B cell (primary cell): ENCODE measurements at regions of chr19 and their contacts with region 1.

Region 1: GRCh38 chr19:52048555-52049501 is at the start of gene ZNF432:
- DNase-seq: peak; percentile 93
- ATAC-seq: peak; percentile 87
- H3K4me3 ChIP-seq: peak within 1 kb of the TSS; percentile 70 to 99 (median 93)
- H3K4me3 Mint-ChIP-seq: peak within 1 kb of the TSS; percentile 98
- H3K27ac ChIP-seq: peak within 1 kb of the TSS; percentile 92 to 99
- H3K27ac Mint-ChIP-seq: peak within 1 kb of the TSS; percentile 100
- H3K4me1 ChIP-seq: peaks cover 9 to 10% of the 10 kb centered on the region in 2 donors
- H3K4me1 Mint-ChIP-seq: peaks cover 22% of the 10 kb centered on the region
- H3K27me3 ChIP-seq: no peaks in the 10 kb centered on the region
- H3K27me3 Mint-ChIP-seq: no peaks in the 10 kb centered on the region
- CTCF ChIP-seq: no peak
- total RNA-seq, gene ZNF432: 25.0 and 28.7 TPM in 2 replicates

Region 2: GRCh38 chr19:51986309-51987291 is 62.2 kb before region 1 on chr19 and contains the start of gene ZNF350:
- CTCF ChIA-PET with region 1: no interaction called
- POLR2A ChIA-PET with region 1: interaction called, 6 read pairs
- intact Hi-C with region 1: loop called (anchors 1 kb)
- DNase-seq: peak; percentile 96
- ATAC-seq: peak; percentile 99
- H3K4me3 ChIP-seq: peak within 1 kb of the TSS; percentile 88 to 100 (median 99)
- H3K4me3 Mint-ChIP-seq: peak within 1 kb of the TSS; percentile 95
- H3K27ac ChIP-seq: peak within 1 kb of the TSS; percentile 75 to 81
- H3K27ac Mint-ChIP-seq: peak within 1 kb of the TSS; percentile 94
- H3K4me1 ChIP-seq: peaks cover 5 to 15% of the 10 kb centered on the region in 2 donors
- H3K4me1 Mint-ChIP-seq: peaks cover 13% of the 10 kb centered on the region
- H3K27me3 ChIP-seq: no peaks in the 10 kb centered on the region
- H3K27me3 Mint-ChIP-seq: no peaks in the 10 kb centered on the region
- CTCF ChIP-seq: no peak
- total RNA-seq, gene ZNF350: 50.2 and 53.0 TPM in 2 replicates

Region 3: DNA sequence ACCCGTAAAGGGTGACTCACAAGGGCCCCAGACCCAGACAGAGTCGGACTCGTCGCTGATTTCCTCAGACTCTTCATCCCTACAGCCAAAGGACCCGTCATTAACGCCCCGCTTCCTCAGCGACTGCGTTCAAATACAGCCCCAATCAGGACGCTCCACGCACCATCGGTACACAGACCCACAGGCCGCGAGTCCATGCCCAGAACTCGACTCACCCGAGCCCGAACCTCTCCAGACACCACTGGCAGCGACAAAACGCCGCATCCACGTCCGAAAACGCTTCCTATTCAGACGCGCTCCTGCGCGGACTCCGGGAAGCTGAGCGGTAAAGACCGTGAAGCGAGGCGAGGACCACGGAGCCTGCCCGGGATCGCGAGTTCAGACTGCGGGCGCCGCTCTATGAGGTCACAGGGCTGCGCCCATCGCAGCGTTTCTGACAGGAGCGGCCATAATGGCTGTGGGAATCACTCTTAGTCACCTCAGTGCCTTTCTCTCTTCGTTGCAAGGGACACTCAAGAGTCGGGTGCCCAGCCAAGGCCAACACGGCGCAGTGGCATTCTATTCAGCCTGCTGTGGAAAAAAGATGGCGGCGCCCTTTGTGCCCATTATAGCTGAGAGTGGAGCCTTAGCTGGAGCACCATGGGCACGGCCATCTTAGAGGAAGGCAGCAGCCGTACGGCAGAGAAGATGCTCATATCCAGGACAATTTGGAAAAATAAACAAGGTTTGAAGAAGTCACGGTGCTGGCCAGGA is 20.6 kb before region 1 on chr19 and contains the start of gene ZNF614:
- CTCF ChIA-PET with region 1: no interaction called
- POLR2A ChIA-PET with region 1: interaction called, 19 read pairs
- intact Hi-C with region 1: loop called (anchors 1 kb)
- DNase-seq: peak; percentile 93
- ATAC-seq: peak; percentile 85
- H3K4me3 ChIP-seq: peak within 1 kb of the TSS; percentile 91 to 97 (median 93)
- H3K4me3 Mint-ChIP-seq: peak within 1 kb of the TSS; percentile 90
- H3K27ac ChIP-seq: peak within 1 kb of the TSS; percentile 97
- H3K27ac Mint-ChIP-seq: peak within 1 kb of the TSS; percentile 93
- H3K4me1 ChIP-seq: peaks cover 5 to 13% of the 10 kb centered on the region in 2 donors
- H3K4me1 Mint-ChIP-seq: peaks cover 25% of the 10 kb centered on the region
- H3K27me3 ChIP-seq: no peaks in the 10 kb centered on the region
- H3K27me3 Mint-ChIP-seq: no peaks in the 10 kb centered on the region
- CTCF ChIP-seq: no peak
- total RNA-seq, gene ZNF614: 12.3 and 14.3 TPM in 2 replicates

Region 4: DNA sequence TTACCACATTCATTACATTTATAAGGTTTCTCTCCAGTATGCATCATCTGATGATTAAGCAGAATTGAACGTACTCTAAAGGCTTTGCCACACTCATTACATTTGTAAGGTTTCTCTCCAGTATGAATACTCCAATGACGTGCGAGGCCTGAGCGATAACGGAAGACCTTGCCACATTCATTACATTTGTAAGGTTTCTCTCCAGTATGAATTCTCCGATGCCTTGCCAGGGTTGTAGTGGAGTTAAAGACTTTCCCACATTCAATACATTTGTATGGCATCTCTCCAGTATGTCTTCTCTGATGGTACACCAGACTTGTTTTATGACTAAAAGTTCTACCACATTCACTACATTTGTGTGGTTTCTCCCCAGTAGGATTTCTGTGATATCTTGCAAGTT is 16.6 kb after region 1 on chr19:
- CTCF ChIA-PET with region 1: no interaction called
- POLR2A ChIA-PET with region 1: no interaction called
- intact Hi-C with region 1: no loop called
- DNase-seq: no peak
- ATAC-seq: no peak
- H3K4me3 ChIP-seq: no peak overlapping the region
- H3K4me3 Mint-ChIP-seq: no peak overlapping the region
- H3K27ac ChIP-seq: no peak overlapping the region
- H3K27ac Mint-ChIP-seq: no peak overlapping the region
- H3K4me1 ChIP-seq: no peaks in the 10 kb centered on the region
- H3K4me1 Mint-ChIP-seq: no peaks in the 10 kb centered on the region
- H3K27me3 ChIP-seq: no peaks in the 10 kb centered on the region
- H3K27me3 Mint-ChIP-seq: no peaks in the 10 kb centered on the region
- CTCF ChIP-seq: no peak

Region 5: GRCh38 chr19:52189735-52190486 is 141.1 kb after region 1 on chr19 and contains the start of gene PPP2R1A:
- CTCF ChIA-PET with region 1: no interaction called
- POLR2A ChIA-PET with region 1: interaction called, 11 read pairs
- intact Hi-C with region 1: loop called (anchors 1 kb)
- DNase-seq: peak; percentile 100
- ATAC-seq: peak; percentile 74
- H3K4me3 ChIP-seq: peak within 1 kb of the TSS; percentile 60 to 100 (median 85)
- H3K4me3 Mint-ChIP-seq: peak within 1 kb of the TSS; percentile 99
- H3K27ac ChIP-seq: peak within 1 kb of the TSS; percentile 89 to 99
- H3K27ac Mint-ChIP-seq: peak within 1 kb of the TSS; percentile 100
- H3K4me1 ChIP-seq: peaks cover 41 to 56% of the 10 kb centered on the region in 2 donors
- H3K4me1 Mint-ChIP-seq: peaks cover 45% of the 10 kb centered on the region
- H3K27me3 ChIP-seq: no peaks in the 10 kb centered on the region
- H3K27me3 Mint-ChIP-seq: no peaks in the 10 kb centered on the region
- CTCF ChIP-seq: no peak
- total RNA-seq, gene PPP2R1A: 202 and 227 TPM in 2 replicates

Region 6: GRCh38 chr19:53520550-53521372 is 1471.9 kb after region 1 on chr19:
- CTCF ChIA-PET with region 1: no interaction called
- POLR2A ChIA-PET with region 1: no interaction called
- intact Hi-C with region 1: loop called (anchors 2 kb)
- DNase-seq: peak; percentile 96
- ATAC-seq: peak; percentile 97
- H3K4me3 ChIP-seq: peak overlapping the region; percentile 59 to 96 (median 81)
- H3K4me3 Mint-ChIP-seq: peak overlapping the region; percentile 96
- H3K27ac ChIP-seq: peak overlapping the region; percentile 66 to 89
- H3K27ac Mint-ChIP-seq: peak overlapping the region; percentile 95
- H3K4me1 ChIP-seq: peaks cover 7 to 15% of the 10 kb centered on the region in 2 donors
- H3K4me1 Mint-ChIP-seq: peaks cover 16% of the 10 kb centered on the region
- H3K27me3 ChIP-seq: no peaks in the 10 kb centered on the region
- H3K27me3 Mint-ChIP-seq: no peaks in the 10 kb centered on the region
- CTCF ChIP-seq: no peak